ENCODE measurements at regions of chr13 and their contacts with region 1.

Region 1: DNA sequence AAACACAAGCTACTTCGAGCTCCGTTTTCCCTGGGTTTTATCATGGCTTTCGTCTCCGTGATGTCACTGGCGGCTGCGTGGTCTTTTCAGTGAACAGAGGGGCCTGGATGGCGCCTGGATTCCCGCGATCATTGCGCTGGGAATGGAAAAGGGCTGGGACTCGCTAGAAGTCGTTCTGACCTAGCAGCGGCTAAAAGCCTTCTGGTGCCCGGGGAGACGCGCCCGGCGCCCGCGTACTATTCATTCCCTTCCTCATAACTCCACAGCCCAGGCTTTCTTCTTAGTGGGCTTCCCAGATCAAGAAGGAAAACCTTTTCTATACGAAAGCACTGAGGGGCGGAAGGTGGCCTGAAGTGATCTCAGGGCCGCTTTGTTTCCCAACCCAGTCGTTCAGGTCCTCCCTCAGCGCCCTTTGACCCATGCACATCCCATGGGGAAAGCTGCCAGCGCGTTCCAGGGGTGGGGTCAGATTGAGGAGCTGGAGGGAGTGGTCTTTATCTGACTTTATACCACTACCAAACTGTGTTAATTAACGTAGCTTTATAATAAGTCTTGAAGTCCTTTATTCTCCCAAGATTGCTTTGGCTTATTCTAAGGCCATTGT is 96.6 kb downstream of the ELF1 start:
- DNase-seq: no peak
- H3K4me3 ChIP-seq: peak overlapping the region in 2 of 59 donors; percentile 74 to 85
- H3K27ac ChIP-seq: no peak overlapping the region
- H3K27me3 ChIP-seq: no peaks in the 10 kb centered on the region
- CTCF ChIP-seq: no peak

Region 2: GRCh38 chr13:40974460-40975407 is 52.2 kb after region 1 on chr13:
- intact Hi-C with region 1: loop called in 1 of 2 experiments (anchors 5 kb)
- DNase-seq: no peak
- H3K4me3 ChIP-seq: no peak overlapping the region
- H3K27ac ChIP-seq: peak overlapping the region in 10 of 59 donors; percentile 5 to 63 (median 34)
- H3K27me3 ChIP-seq: no peaks in the 10 kb centered on the region
- CTCF ChIP-seq: peak in 46 of 56 donors; percentile 7 to 53 (median 34)

Measured in dorsolateral prefrontal cortex (tissue), 120 donors.